Activated CD8-positive, alpha-beta T cell treated with anti-CD3 and anti-CD28 coated beads, Interleukin-2, amount 10 ng/mL, durations not matched to agents 7 days and 5 days (primary cell): ENCODE measurements at regions of chrX and their contacts with region 1.

Region 1: DNA sequence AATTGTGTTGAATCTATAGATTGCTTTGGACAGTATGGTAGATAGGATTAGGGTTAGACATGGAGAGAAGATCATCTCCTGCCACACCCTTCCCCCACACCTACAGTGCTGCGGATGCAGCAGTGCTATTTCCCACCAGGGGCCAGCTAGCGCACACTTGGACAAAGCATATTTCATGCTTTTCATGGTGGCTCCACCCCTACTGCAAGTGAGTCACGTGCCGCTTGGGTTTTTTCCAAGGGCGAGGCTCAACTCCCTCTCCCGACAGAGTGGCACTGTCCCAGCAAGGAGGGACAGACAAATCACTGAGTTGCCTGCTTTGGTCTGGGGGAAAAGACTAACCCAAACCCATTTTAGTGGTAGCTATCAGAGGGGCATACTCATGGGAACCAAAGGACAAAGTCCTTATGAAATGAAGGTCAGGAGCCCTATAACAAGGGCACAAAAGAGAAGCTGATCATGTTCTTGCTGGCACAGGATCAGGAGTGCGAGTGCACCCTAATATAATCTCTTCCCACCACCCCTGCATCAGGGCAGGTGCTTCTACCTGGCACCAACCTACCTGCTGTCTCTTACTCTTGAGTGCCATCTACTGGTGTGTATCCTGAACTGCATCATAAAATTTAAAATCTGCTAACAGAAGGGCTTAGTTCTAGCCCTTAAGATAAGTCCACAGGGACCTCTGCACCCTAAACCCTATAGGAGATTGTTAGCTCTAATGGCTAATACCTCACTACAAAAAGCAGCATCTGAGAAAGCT is 55.1 kb upstream of the PGAM4 start:
- DNase-seq: peak; percentile 30
- ATAC-seq: peak; percentile 19
- H3K4me3 Mint-ChIP-seq: no peak overlapping the region
- H3K27ac Mint-ChIP-seq: no peak overlapping the region
- H3K4me1 Mint-ChIP-seq: peaks cover 4% of the 10 kb centered on the region
- H3K27me3 Mint-ChIP-seq: no peaks in the 10 kb centered on the region

Region 2: GRCh38 chrX:77719388-77719787 is 305.1 kb before region 1 on chrX:
- CTCF ChIA-PET with region 1: no interaction called
- POLR2A ChIA-PET with region 1: no interaction called
- DNase-seq: no peak
- ATAC-seq: no peak
- H3K4me3 Mint-ChIP-seq: no peak overlapping the region
- H3K27ac Mint-ChIP-seq: no peak overlapping the region
- H3K4me1 Mint-ChIP-seq: peaks cover 15% of the 10 kb centered on the region
- H3K27me3 Mint-ChIP-seq: no peaks in the 10 kb centered on the region

Region 3: DNA sequence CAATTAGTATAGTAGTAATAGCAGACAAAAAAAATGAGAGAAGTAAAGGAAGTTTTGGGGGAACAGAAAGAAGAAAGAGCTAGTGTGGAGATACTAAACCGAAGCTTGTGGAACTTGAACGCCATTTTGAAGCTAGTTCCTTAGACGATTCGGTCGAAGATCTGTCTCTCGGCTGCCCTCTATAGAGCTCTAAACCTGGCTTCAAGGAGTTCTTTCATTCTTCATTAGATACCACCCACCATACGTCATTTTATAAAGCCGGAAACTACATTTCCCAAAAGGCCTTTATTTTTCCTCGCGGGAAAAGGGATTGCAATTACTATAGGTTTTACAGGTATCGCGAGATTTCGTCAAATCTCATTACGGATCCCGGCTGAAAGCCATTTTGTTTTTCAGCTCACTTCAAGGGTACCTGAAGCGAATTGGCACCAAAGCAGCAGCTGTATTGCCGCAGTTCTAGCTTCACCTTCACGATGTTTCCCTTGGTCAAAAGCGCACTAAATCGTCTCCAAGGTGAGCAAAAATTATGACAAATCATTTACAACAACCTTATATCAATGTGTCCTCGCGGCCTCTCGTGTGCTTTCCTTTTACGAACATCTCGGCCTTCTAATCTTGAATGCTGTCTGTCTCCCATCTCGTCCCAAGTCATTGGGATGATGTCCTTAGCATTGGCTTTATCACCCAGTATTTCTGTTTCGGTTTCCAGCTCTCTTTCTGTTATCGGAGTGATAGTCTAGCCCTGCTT is 125.3 kb before region 1 on chrX and contains the start of gene COX7B:
- CTCF ChIA-PET with region 1: interaction called, 10 read pairs
- POLR2A ChIA-PET with region 1: no interaction called
- DNase-seq: peak; percentile 82
- ATAC-seq: peak; percentile 67
- H3K4me3 Mint-ChIP-seq: peak within 1 kb of the TSS; percentile 88
- H3K27ac Mint-ChIP-seq: peak within 1 kb of the TSS; percentile 96
- H3K4me1 Mint-ChIP-seq: peaks cover 23% of the 10 kb centered on the region
- H3K27me3 Mint-ChIP-seq: no peaks in the 10 kb centered on the region
- total RNA-seq, gene COX7B: 329 to 334 TPM

Region 4: DNA sequence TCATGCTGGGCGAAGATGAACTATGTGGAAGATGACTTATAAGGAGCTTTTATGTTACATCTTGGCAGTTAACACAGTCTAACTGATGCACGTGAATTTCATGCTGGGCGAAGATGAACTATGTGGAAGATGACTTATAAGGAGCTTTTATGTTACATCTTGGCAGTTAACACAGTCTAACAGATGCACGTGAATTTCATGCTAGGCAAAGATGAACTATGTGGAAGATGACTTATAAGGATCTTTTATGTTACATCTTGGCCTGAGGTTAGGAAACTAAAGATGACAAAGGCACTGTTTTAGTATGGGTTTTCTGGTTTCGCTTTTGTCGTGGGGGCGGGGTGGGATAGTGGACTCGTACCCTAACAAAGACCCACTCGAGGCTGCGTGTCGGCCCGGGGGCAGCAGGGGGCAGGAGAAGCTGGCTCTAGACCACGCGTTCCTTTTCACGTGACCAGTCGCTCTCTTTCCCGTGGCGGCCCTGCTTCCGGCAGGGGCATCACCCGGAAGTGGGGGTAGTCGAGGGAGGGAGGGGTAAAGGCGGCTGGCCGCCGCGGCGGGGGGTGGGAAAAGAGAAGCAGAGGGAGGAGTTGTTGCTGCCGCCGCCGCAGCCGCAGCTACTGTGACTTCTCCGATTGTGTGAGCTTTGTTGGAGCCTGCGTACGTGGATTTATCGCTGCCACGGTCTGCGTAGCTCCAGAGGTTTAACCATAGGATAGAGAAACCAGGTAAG is 114.3 kb before region 1 on chrX and contains the start of gene ATP7A:
- CTCF ChIA-PET with region 1: interaction called, 11 read pairs
- POLR2A ChIA-PET with region 1: no interaction called
- DNase-seq: peak; percentile 93
- ATAC-seq: peak; percentile 95
- H3K4me3 Mint-ChIP-seq: peak within 1 kb of the TSS; percentile 88
- H3K27ac Mint-ChIP-seq: peak within 1 kb of the TSS; percentile 91
- H3K4me1 Mint-ChIP-seq: peaks cover 18% of the 10 kb centered on the region
- H3K27me3 Mint-ChIP-seq: no peaks in the 10 kb centered on the region
- total RNA-seq, gene ATP7A: 8.6 to 8.8 TPM

Region 5: DNA sequence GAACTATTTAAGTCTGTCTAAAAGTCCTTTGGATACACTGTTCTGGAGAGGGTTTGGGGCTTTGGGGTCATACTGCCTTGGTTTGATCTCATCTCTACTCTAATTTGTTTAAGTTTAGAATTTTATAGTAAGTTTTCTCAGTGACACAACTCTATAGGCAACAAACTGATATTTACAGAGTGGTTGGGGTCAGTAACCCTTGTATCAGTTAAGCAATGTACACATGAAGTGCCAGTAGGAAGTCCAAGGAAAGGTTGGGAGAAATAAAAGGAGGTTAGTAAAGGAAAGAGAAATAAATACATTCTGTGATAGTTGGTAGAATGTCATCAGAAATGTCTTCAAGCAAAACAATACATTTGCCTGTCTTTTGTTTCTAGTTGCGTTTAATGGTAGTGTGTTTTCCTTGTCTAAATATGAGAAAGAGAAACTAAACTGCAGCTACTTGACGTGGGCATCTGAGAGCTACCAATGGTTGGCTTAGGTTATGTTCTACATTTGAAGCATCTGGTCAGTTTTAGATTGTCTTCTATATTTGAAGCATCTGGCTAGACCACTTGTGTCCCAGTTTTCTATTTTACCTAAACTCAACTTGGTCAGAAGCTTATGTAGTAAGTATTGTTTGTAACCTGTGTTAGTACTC is 107.1 kb before region 1 on chrX:
- CTCF ChIA-PET with region 1: interaction called, 12 read pairs
- POLR2A ChIA-PET with region 1: no interaction called
- DNase-seq: no peak
- ATAC-seq: no peak
- H3K4me3 Mint-ChIP-seq: peak overlapping the region; percentile 61
- H3K27ac Mint-ChIP-seq: peak overlapping the region; percentile 70
- H3K4me1 Mint-ChIP-seq: peaks cover 23% of the 10 kb centered on the region
- H3K27me3 Mint-ChIP-seq: no peaks in the 10 kb centered on the region